ENCODE measurements at regions of chr9 and their contacts with region 1.

Region 1: DNA sequence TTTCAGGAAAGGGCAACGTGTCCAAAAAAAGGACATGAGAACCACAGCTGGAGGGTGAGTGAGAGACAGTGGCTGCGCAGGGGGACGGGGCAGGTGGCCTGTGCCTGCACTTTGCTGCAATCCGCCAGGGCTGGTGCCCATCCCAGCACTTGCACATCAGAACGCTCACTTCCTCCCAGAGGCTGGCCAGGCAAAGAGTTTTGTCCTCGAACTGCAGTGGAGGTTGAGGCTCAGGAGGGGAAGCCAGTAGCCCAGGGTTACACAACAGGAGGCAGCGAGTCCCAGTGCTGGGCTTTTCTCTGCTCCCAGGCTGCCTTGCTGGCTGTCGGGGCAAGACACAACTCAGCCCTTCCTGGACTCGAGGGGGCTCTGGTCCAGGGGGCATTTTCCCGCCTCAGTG is 33.1 kb downstream of the CRB2 start:
- DNase-seq: no peak
- H3K4me3 ChIP-seq: no peak overlapping the region
- H3K27ac ChIP-seq: no peak overlapping the region
- H3K4me1 ChIP-seq: no peaks in the 10 kb centered on the region
- H3K27me3 ChIP-seq: no peaks in the 10 kb centered on the region
- CTCF ChIP-seq: no peak
- EP300 ChIP-seq: no peak
- RAD21 ChIP-seq: no peak

Region 2: DNA sequence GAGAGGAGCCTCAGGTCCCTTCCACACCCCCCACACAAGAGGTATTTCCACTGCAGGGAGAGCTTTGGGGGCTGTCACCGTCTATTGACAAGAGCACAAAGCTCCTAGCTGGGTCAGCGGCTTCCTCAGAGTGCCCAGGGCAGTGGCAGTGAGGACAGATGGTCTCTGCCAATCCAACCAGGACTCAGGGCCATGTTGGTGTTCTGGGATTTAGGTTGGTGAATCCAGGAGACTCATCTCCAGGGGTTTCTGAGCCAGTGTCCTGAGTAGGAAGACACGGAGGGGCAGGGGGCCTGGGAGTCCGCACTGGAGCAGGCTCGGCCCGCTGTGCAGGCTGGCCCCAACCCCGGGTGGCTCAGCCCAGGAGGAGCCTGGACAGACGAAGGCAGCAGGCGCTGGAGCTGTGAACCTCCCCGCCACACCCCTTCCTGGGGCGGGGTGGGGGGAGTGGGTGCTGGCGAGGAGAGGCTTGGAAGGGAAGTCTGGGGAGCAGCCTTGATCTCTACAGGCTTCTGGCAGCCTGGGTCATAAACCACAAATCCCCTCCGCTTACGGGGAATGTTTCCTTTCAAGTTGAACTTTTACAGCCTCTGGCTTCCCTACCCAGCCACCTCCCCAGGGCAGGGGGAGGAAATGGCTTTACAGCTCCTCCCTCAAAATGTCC is 13.5 kb before region 1 on chr9:
- CTCF ChIA-PET with region 1: interaction called, 27 read pairs
- POLR2A ChIA-PET with region 1: no interaction called
- DNase-seq: no peak
- H3K4me3 ChIP-seq: no peak overlapping the region
- H3K27ac ChIP-seq: no peak overlapping the region
- H3K4me1 ChIP-seq: peaks cover 0 to 30% of the 10 kb centered on the region in 2 experiments; a peak in 1 of 4 replicates
- H3K27me3 ChIP-seq: peaks cover 40% of the 10 kb centered on the region
- CTCF ChIP-seq: no peak
- EP300 ChIP-seq: no peak
- RAD21 ChIP-seq: no peak

Region 3: GRCh38 chr9:123401879-123402513 is 12.9 kb after region 1 on chr9:
- CTCF ChIA-PET with region 1: interaction called, 20 read pairs
- POLR2A ChIA-PET with region 1: no interaction called
- DNase-seq: peak; percentile 81
- H3K4me3 ChIP-seq: peak overlapping the region in 1 of 2 experiments; percentile 30; a peak in 1 of 4 replicates
- H3K27ac ChIP-seq: no peak overlapping the region
- H3K4me1 ChIP-seq: peaks cover 0 to 6% of the 10 kb centered on the region in 2 experiments; a peak in 1 of 4 replicates
- H3K27me3 ChIP-seq: no peaks in the 10 kb centered on the region
- CTCF ChIP-seq: peak; percentile 78
- EP300 ChIP-seq: no peak
- RAD21 ChIP-seq: peak; percentile 92